Esophagus squamous epithelium (tissue), 5 donors: ENCODE measurements at regions of chr7 and their contacts with region 1.

Region 1: DNA sequence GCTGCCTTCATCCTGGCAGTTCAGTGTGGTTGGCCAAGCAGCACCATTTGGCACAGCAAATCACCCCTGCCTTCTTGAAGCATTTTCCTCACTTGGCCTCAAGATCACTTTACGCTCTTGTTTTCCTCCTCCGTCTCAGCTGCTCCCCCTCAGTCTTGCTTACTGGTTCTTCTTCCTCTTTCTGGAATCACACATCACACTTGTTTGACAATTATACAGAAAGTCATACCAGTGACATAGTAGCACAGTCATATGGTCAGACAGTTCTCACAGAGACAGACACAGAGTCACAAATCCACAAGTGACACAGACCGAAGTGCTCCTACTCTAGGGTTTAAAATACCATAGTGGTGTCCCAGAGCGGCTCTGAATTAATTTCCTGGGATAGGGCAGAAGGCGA is 43.8 kb upstream of the ARL4A start:
- DNase-seq: no peak
- H3K4me3 ChIP-seq: no peak overlapping the region
- H3K27ac ChIP-seq: peak overlapping the region in 1 of 4 donors; percentile 28
- H3K4me1 ChIP-seq: peaks cover 0 to 23% (median 2%) of the 10 kb centered on the region in 3 donors
- H3K27me3 ChIP-seq: no peaks in the 10 kb centered on the region
- CTCF ChIP-seq: no peak
- POLR2A ChIP-seq: no peak

Region 2: GRCh38 chr7:12683669-12684580 is 40.3 kb after region 1 on chr7:
- intact Hi-C with region 1: loop called (anchors 5 kb)
- DNase-seq: no peak
- H3K4me3 ChIP-seq: no peak overlapping the region
- H3K27ac ChIP-seq: no peak overlapping the region
- H3K4me1 ChIP-seq: peaks cover 0 to 17% (median 0%) of the 10 kb centered on the region in 3 donors
- H3K27me3 ChIP-seq: no peaks in the 10 kb centered on the region
- CTCF ChIP-seq: peak in 5 of 6 experiments; percentile 15 to 45 (median 22)
- POLR2A ChIP-seq: no peak